Mammary epithelial cell (primary cell): ENCODE measurements at regions of chr12 and their contacts with region 1.

Region 1: DNA sequence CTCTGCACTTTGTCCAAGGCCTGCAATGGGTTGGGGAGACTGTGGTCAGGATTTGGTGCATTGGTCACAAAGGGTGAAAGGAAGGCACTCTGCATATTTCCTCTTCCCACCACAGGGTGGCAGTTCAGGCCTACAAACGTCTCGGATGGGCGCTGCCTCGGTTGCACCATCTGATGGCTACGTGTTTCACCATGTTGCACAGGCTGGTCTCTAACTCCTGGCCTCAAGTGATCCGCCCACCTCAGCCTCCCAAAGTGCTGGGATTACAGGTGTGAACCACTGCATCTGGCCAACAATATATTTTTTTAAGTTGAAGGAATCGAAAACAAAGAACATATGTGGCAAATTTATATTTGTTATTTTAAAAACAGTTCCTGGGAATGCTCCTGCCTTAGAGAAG is 35.1 kb downstream of the TMBIM6 start:
- DNase-seq: peak; percentile 64
- H3K4me3 ChIP-seq: no peak overlapping the region
- H3K27ac ChIP-seq: no peak overlapping the region
- H3K4me1 ChIP-seq: peaks cover 15% of the 10 kb centered on the region
- H3K27me3 ChIP-seq: no peaks in the 10 kb centered on the region
- CTCF ChIP-seq: peak; percentile 84 to 85

Region 2: DNA sequence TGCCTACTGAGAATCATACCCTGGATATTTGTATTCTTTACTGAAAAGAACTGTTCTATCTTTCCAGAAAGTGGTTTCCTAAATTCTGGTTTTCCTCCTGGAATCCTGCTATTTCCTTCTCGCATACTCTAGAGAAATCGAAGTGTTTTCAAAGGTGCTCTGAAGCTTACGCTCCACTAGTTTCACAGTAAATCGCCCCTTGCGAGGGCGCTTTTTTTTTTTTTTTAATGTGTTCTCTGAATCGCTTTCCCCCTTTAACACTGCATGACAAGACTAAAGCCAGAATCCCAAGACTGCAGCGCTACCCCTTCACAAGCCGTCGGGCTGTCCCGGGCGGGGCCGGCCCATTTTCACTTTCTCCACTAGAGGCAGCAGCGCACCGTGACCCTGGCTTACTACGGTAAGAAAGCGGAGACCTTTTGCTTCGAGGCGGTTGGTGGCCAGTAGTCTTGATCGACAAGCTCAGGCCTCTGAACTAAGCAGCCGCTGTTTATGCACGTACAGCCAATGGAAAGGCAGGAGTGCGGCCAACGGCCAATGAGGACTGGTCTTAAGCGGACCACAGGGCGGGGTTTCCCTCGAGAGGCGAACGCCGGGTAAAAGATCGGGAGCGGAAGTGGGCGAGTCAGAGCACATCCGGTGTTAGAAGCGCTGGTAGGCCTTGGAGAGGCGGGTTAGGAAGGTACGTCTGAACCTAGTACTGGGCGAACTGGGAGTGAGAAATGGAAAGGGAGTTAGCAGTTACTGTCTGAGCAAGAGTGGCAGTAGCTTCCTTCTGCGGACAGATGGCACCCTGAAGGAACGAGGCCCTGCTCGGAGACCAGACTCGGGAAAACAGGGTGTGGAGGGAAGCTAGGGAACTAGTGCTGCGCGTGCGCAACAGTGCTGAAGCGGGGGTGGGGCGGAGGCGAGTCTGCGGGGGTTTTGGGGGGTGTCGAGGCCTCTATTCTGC is 35.2 kb before region 1 on chr12 and contains the start of gene TMBIM6:
- CTCF ChIA-PET with region 1: no interaction called
- dilution Hi-C with region 1: no loop called
- in situ Hi-C with region 1: no loop called
- intact Hi-C with region 1: loop called (anchors 1 kb)
- DNase-seq: peak; percentile 100
- H3K4me3 ChIP-seq: peak within 1 kb of the TSS; percentile 55 to 74 (median 69)
- H3K27ac ChIP-seq: peak within 1 kb of the TSS; percentile 92
- H3K4me1 ChIP-seq: peaks cover 17% of the 10 kb centered on the region
- H3K27me3 ChIP-seq: no peaks in the 10 kb centered on the region
- CTCF ChIP-seq: peak; percentile 92 to 93
- total RNA-seq, gene TMBIM6: 535 to 649 TPM